Prostate gland (tissue), 2 donors: ENCODE measurements at regions of chr1 and their contacts with region 1.

Region 1: DNA sequence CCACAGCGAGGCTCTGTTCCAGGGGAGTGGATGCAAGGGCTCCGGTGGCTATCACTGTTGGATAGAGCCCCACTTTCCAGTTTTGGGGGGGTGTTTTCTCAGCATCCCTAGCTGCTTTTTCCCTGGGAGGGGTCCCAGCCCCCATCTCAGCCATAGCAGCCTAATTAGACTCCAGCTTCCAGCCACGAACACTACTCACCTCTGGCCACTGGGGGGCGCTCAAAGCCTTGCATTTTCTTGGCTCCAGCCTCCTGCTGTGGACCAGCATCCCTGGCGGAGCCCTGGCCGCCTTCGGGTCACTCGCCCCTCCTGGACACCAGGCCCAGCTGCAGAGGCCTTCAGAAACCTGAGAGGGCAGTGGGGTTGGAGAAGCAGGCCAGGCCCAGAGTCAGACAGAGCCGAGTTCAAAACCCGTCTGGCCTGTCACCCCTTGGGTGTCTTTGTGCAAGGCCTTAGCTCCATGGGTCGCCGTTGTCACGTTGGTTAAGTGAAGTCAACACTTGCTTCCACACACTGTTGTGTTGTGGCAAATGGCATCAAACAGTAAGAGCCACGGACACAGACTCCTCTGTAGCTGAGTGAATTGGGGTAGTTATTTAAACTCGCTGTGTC is 93.5 kb upstream of the ACTL8 start:
- DNase-seq: peak; percentile 45
- H3K4me3 ChIP-seq: no peak overlapping the region
- H3K27ac ChIP-seq: no peak overlapping the region
- H3K4me1 ChIP-seq: no peaks in the 10 kb centered on the region
- H3K27me3 ChIP-seq: no peaks in the 10 kb centered on the region
- CTCF ChIP-seq: peak; percentile 74 to 82 (median 76)
- POLR2A ChIP-seq: no peak

Region 2: GRCh38 chr1:17759114-17759513 is 97.5 kb after region 1 on chr1:
- intact Hi-C with region 1: no loop called
- DNase-seq: no peak
- H3K4me3 ChIP-seq: no peak overlapping the region
- H3K27ac ChIP-seq: no peak overlapping the region
- H3K4me1 ChIP-seq: no peaks in the 10 kb centered on the region
- H3K27me3 ChIP-seq: peaks cover 8% of the 10 kb centered on the region
- CTCF ChIP-seq: no peak
- POLR2A ChIP-seq: no peak

Region 3: DNA sequence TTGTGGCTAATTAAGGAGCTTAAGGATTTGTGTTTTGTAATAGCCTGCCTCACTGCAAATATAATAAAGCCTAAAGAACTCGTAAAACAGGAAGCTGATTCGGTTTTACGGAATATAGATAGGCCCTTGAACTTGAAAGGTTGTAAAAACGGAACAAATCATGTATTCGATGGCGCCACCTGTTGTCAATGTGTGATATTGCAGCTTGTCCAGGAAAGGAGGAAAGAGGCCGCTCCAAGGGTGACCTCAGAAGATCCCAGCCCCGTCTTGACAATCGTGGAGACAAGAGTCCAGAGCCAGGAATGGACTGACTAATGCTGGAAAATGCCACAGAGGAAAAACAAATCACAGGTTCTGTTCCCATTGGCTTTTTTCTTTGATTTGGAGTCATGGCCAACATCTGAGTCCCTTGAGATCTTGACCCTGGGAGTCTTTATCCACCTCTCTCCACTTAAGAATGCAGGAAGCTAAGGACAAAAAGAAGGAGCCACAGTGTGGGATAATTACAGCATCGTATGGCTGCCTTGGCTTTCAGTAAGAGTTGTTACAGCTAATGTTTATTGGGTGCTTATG is 438.9 kb after region 1 on chr1:
- intact Hi-C with region 1: loop called (anchors 10 kb)
- DNase-seq: peak; percentile 42
- H3K4me3 ChIP-seq: no peak overlapping the region
- H3K27ac ChIP-seq: no peak overlapping the region
- H3K4me1 ChIP-seq: no peaks in the 10 kb centered on the region
- H3K27me3 ChIP-seq: peaks cover 7% of the 10 kb centered on the region
- CTCF ChIP-seq: peak; percentile 26 to 84 (median 82)
- POLR2A ChIP-seq: no peak